H1 (cell line): ENCODE measurements at regions of chr2 and their contacts with region 1.

Region 1: DNA sequence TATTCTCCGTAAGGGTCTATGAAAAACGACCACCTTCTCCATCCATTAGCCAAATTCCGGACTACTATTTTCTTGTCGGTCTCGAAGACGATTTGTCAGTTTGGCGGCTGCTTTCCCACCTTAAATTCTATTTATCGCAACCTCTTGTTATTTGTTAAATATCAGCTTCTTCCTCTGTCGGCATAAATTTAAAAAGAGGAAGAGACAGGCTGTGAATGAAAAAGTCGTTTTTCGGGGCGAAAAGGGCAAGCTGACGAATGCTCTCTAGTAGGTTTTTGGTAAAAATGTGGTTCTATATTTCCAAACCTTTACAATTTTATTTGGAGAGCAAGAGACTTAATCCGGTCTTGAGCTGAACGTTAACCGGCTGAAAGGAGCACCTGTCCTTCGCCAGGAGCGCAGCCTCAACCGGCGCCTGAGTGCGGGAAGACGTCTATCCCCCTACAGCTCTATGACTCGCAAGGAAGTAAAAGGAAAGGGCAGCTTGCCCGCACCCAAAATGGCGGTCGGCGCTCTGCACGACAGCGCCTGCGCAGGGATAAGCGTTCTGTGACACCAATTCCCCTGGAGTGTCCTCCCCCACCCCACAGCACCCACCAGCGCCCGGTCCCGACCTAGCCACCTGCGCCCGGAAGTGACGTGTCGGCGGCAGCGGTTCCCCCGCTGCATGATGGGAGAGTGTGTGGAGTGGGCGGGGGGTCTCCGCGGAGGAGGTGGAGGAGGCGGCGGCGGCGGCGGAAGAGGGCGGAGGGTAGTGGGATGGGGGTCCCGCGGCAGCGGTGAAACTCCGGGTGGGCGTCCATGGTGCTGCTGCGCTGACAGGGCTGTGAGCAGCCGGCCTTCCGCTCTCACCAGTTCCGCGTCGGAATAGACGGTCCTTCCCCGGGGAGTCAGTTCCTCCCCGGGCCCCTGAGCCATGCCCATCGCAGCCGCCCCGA is at the start of gene AFTPH:
- DNase-seq: peak; percentile 95 to 98
- H3K4me3 ChIP-seq: peak within 1 kb of the TSS; percentile 73 to 88 (median 82)
- H3K27ac ChIP-seq: peak within 1 kb of the TSS; percentile 48
- H3K4me1 ChIP-seq: peaks cover 0 to 4% (median 0%) of the 10 kb centered on the region in 4 experiments; a peak in 1 of 7 replicates
- H3K27me3 ChIP-seq: no peaks in the 10 kb centered on the region
- CTCF ChIP-seq: no peak
- EP300 ChIP-seq: no peak
- POLR2A ChIP-seq: peak in 1 of 2 experiments; percentile 74; a peak in 2 of 3 replicates
- RAD21 ChIP-seq: 0 out of 4 replicates have a peak, but pooled peaks of 1 of the 2 experiments have one; percentile 1
- total RNA-seq, gene AFTPH: 13.5 and 15.0 TPM in 2 replicates

Region 2: DNA sequence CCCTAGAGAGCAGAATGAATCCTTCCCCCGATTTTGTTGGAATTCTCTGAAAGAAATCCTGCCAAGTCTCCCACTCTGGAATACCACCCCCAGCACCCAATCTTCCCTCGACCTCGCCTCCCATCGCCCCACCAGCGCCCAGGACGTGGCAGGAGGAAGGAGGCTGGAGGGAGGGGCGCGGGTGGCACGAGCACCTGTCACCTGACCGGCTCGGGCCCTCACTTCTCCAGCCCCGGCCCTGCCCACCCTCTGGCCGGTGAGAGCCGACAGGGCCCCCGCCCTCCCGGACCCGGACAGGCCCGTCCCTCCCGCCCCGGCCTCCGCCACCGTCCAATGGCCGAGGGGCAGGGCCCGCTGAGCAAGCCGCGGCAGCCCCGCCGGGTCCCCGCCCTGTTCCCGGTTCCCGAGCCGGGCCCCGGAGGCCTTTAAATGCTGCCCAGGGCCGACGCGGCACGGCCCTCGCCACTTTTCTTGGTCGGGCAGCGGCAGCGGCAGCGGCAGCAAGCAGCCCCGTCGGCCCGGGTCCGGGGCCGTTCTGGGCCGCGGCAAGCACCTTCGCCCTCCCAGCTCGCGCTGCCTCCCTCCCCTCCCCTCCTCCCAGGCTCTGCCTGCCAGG is 70.1 kb before region 1 on chr2 and contains the start of gene LGALSL:
- CTCF ChIA-PET with region 1: no interaction called
- POLR2A ChIA-PET with region 1: no interaction called
- DNase-seq: peak in 1 of 2 experiments; percentile 86
- H3K4me3 ChIP-seq: peak within 1 kb of the TSS; percentile 68 to 89 (median 78)
- H3K27ac ChIP-seq: peak within 1 kb of the TSS; percentile 88; the same call in 1 of the 2 replicates
- H3K4me1 ChIP-seq: peaks cover 2 to 12% (median 5%) of the 10 kb centered on the region in 4 experiments; a peak in 4 of 7 replicates
- H3K27me3 ChIP-seq: no peaks in the 10 kb centered on the region
- CTCF ChIP-seq: no peak
- EP300 ChIP-seq: no peak
- POLR2A ChIP-seq: no peak; a peak in 2 of 3 replicates
- RAD21 ChIP-seq: no peak
- total RNA-seq, gene LGALSL: 29.2 and 32.3 TPM in 2 replicates

Region 3: GRCh38 chr2:64504774-64505720 is 18.9 kb before region 1 on chr2:
- CTCF ChIA-PET with region 1: interaction called, 12 read pairs
- POLR2A ChIA-PET with region 1: no interaction called
- DNase-seq: no peak
- H3K4me3 ChIP-seq: no peak overlapping the region
- H3K27ac ChIP-seq: no peak overlapping the region; the same call in 1 of the 2 replicates
- H3K4me1 ChIP-seq: no peaks in the 10 kb centered on the region
- H3K27me3 ChIP-seq: no peaks in the 10 kb centered on the region
- CTCF ChIP-seq: no peak
- EP300 ChIP-seq: no peak
- POLR2A ChIP-seq: no peak
- RAD21 ChIP-seq: no peak

Region 4: GRCh38 chr2:64558445-64559081 is 34.6 kb after region 1 on chr2:
- CTCF ChIA-PET with region 1: interaction called, 15 read pairs
- POLR2A ChIA-PET with region 1: interaction called, 3 read pairs
- DNase-seq: no peak
- H3K4me3 ChIP-seq: no peak overlapping the region
- H3K27ac ChIP-seq: no peak overlapping the region
- H3K4me1 ChIP-seq: peaks cover 0 to 3% (median 1%) of the 10 kb centered on the region in 4 experiments; a peak in 2 of 7 replicates
- H3K27me3 ChIP-seq: no peaks in the 10 kb centered on the region
- CTCF ChIP-seq: no peak
- EP300 ChIP-seq: no peak
- POLR2A ChIP-seq: no peak
- RAD21 ChIP-seq: no peak

Region 5: DNA sequence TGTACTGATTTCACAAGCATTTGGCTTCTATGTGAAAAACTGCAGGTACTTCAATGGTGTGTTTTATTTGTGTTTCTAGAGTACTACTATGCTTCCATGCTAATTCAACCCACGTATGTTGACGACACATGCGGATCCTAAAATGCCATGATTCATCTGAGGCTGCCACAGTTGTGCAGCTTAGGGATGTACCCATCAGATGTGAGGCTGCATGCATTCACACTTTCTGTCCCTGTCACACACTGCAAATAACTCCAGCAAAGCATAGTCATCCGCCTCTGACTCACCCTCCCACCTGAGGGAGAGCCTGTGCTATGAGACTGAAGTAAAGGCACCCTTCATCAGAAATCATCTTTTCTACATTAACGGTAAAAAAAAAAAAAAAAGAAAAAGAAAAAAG is 151.9 kb after region 1 on chr2:
- CTCF ChIA-PET with region 1: no interaction called
- POLR2A ChIA-PET with region 1: no interaction called
- DNase-seq: no peak
- H3K4me3 ChIP-seq: no peak overlapping the region
- H3K27ac ChIP-seq: no peak overlapping the region
- H3K4me1 ChIP-seq: peaks cover 0 to 3% (median 0%) of the 10 kb centered on the region in 4 experiments; a peak in 1 of 7 replicates
- H3K27me3 ChIP-seq: no peaks in the 10 kb centered on the region
- CTCF ChIP-seq: no peak
- EP300 ChIP-seq: no peak
- POLR2A ChIP-seq: no peak
- RAD21 ChIP-seq: no peak